ENCODE measurements at regions of chr20 and their contacts with region 1.

Region 1: DNA sequence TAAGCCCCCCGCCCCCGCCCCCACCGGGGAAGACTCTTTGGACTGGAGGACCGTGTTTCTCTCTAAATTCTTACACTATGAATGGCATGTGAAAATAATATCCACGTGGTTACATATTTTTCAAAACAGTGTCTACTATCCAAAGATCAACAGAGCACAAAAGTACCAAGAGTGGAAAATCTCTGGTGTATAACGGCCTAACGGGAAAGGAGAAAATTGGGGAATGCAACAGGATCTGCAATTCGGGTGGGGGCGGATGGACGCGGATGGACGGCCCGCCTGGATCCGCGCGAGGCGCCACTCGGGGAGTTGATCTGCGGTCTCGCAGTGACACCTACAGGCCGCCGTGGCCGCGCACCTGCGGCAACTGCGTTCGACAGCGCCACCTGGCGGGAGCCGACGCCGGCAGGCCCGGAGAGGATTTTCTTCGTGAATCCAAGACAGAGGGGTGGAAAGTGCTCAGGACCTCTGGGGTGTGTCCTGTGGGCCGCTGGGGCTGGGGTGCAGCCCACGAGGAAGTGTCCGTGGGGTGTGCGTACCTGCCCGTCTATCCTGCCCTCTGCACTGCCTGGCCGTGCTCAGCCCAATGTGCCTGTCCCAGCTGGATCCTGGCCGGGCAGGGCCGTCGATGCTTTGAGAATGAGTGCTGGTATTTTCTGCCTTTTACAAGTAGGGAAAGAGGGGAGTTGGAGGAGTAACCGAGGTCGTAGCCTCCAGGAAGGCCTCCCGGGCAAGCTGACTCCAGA is 18.6 kb downstream of the ANKRD60 start:
- DNase-seq: peak; percentile 93
- CTCF ChIP-seq: peak; percentile 100

Region 2: DNA sequence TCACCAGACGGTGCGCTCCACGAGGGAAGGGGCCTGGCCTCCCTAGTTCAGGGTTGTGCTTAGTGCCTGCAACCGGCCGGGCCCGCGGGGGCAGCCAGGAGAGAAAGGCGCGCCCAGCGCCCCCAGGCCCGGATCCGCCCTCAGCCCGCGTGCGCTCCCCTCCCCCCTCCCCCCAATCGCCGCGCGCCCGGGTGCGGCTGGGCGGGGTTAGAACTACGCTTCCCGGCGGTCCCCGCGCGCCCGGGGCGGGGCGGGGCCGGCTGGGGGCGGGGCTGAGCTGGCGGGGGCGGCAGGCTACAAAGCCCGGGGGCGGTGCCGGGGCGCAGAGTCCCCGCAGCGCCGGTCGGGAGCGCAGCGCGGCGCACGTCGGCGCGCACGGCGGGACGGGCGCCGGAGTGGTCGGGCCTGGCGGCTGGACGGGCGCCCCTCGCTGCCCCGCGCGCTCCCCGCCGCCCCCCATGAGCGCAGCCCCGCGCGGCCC is 818.7 kb before region 1 on chr20 and contains the start of gene RBM38:
- in situ Hi-C with region 1: loop called (anchors 25 kb)
- DNase-seq: peak; percentile 98
- CTCF ChIP-seq: no peak

Region 3: DNA sequence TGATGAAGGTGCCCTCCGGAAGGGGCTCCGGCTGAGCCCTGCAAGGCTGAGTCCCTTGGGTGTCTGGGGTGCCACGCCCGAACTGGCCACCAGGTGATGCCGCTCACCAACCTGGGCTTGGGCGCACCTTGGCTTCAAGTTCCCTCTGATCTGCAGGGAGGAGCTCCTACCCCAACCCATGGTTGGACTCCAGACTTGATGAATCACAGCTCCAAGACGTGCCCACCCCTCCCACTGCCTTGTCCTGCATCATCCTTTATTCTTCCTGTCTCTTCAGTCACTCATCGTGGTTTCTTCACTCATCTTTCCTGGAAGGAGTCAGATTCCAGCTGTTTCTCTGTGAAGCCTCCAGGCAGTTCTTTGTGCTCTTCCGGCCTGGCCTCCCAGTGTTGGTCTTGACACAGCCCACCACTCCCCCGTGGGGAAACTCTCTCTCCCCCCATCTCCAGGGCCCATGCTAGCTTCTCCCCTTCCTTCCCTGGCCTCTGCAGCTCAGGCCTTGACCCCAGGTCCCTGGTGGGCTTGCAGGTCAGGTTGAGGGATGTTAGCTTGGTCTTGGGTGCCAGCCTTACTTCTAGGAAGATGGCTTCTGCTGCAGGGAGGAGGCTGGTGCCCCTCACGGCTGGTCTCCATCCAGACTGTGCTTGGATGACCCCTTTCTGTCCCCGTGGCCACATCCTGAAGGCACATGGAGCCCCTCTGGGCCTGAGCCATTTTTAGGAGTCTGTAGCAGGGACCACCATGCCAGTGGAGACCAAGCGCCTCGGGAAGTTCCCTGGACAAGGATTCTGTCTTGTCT is 587.0 kb before region 1 on chr20:
- in situ Hi-C with region 1: loop called (anchors 25 kb)
- DNase-seq: peak; percentile 63
- CTCF ChIP-seq: peak; percentile 79

Measured in GM13977 (cell line).